ENCODE measurements at regions of chr2 and their contacts with region 1.

Region 1: DNA sequence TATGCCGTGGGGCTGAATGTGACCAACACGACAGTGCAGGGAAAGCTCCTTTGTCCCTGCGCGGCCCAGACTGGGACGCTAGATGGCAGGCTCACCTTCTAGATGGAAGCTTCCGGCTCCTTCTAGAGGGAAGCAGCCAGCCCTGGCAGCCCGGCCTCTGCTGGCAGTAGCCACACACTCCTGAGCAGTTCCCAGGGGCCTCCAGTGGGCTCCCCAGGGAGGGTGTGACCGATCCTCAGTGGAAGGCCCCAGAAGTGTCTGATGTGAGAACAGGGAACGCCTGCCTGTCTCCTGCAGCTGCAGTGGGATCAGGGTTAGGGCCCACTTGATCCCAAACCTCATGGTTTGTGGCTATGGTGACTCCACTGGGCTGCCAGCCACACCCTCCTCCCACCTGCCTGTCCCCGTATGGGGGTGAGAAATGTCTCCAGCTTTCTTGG is 48.5 kb upstream of the LRPPRC start:
- DNase-seq: peak; percentile 93
- H3K4me3 Mint-ChIP-seq: no peak overlapping the region
- H3K27ac Mint-ChIP-seq: no peak overlapping the region
- H3K4me1 Mint-ChIP-seq: no peaks in the 10 kb centered on the region
- H3K27me3 Mint-ChIP-seq: no peaks in the 10 kb centered on the region

Region 2: DNA sequence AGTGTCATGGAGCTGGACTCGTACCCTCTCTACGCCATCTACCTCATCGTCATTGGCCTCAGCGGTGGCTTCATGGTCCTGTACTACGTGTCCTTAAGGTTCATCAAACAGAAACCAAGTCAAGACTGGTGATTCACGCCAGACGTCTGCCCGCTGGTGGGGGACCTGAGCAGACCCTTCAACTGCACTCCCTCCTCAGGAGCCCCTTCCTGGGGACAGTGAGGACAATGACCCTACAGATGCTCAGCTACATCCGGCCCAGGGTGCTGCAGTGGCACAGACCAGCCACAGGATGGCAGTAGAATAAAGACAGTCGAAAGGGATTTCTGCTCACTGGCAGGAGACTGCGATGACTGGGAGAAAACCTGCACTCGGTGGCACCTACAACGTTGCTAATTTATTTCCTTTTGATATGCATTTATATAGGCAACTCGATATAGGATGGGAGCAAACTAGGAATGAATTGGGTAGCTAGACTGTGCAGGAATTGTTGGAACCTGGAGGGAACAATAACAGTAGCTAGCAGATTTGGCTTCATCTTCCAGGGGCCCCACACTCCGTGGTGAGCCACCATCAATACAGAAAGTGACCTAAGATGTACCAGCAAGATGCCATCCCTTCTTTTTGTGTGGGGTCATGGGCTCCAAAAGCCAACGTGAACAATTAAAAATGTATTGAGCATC is 166.4 kb before region 1 on chr2:
- CTCF ChIA-PET with region 1: no interaction called
- intact Hi-C with region 1: loop called (anchors 1 kb)
- DNase-seq: peak; percentile 86
- H3K4me3 Mint-ChIP-seq: no peak overlapping the region
- H3K27ac Mint-ChIP-seq: no peak overlapping the region
- H3K4me1 Mint-ChIP-seq: peaks cover 3% of the 10 kb centered on the region
- H3K27me3 Mint-ChIP-seq: peaks cover 16% of the 10 kb centered on the region

Region 3: GRCh38 chr2:44055229-44055628 is 10.9 kb after region 1 on chr2:
- CTCF ChIA-PET with region 1: interaction called, 17 read pairs
- intact Hi-C with region 1: no loop called
- DNase-seq: no peak
- H3K4me3 Mint-ChIP-seq: no peak overlapping the region
- H3K27ac Mint-ChIP-seq: no peak overlapping the region
- H3K4me1 Mint-ChIP-seq: no peaks in the 10 kb centered on the region
- H3K27me3 Mint-ChIP-seq: no peaks in the 10 kb centered on the region

Region 4: GRCh38 chr2:44087036-44087713 is 42.9 kb after region 1 on chr2:
- CTCF ChIA-PET with region 1: interaction called, 10 read pairs
- intact Hi-C with region 1: loop called (anchors 1 kb)
- DNase-seq: peak; percentile 91
- H3K4me3 Mint-ChIP-seq: peak overlapping the region; percentile 66
- H3K27ac Mint-ChIP-seq: peak overlapping the region; percentile 54
- H3K4me1 Mint-ChIP-seq: peaks cover 13% of the 10 kb centered on the region
- H3K27me3 Mint-ChIP-seq: no peaks in the 10 kb centered on the region

Region 5: DNA sequence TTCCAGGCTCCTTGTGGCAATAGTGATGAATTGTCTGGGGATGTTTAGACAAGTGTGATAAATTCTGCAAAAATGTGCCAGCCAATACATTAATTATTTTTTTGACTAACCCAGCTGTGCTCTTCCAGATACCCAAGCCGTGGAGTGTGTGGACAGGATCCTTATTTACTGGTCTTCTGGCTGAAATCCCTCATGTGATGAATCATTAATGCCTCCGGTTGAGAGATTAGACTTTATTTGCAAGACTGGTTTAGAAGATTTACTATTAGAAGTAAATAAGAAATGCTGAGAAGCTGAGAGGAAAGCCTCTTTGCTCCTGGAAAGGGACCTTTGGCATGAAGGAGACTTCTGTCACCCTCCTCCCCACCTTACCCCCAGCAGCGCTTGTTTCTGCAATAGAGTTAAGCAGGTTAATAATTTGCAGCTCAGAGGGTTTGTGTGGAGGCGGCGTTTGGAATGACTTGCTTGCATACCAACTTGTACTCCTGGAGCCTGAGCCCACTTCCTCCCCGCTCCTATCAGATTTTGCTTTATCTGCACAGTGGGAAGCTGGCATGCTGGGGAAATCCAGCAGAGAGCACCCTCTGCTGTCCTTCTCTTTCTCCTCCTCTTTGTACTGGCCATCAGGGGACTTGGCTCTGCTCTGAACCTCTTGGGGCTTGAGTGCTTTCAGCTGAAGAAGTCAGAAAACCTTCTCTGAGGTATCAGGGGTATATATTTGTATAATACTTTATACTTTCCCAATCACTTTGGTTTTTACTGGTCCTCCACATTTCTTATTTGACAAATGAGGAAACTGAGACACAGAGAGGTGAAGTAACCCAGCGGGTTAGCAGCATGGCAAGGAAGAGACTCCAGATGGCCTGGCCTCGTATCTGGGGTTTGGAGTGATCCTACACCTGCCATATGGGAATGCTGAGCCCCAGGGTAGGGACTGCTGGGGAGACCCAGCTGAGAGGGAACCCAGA is 247.3 kb after region 1 on chr2:
- CTCF ChIA-PET with region 1: interaction called, 3 read pairs
- intact Hi-C with region 1: loop called (anchors 2 kb)
- DNase-seq: peak; percentile 16
- H3K4me3 Mint-ChIP-seq: no peak overlapping the region
- H3K27ac Mint-ChIP-seq: no peak overlapping the region
- H3K4me1 Mint-ChIP-seq: peaks cover 9% of the 10 kb centered on the region
- H3K27me3 Mint-ChIP-seq: no peaks in the 10 kb centered on the region

Region 6: GRCh38 chr2:44392338-44392943 is 348.1 kb after region 1 on chr2:
- CTCF ChIA-PET with region 1: interaction called, 4 read pairs
- intact Hi-C with region 1: loop called (anchors 1 kb)
- DNase-seq: peak; percentile 72
- H3K4me3 Mint-ChIP-seq: no peak overlapping the region
- H3K27ac Mint-ChIP-seq: no peak overlapping the region
- H3K4me1 Mint-ChIP-seq: peaks cover 5% of the 10 kb centered on the region
- H3K27me3 Mint-ChIP-seq: no peaks in the 10 kb centered on the region

Measured in activated naive CD4-positive, alpha-beta T cell treated with anti-CD3 and anti-CD28 coated beads for 36 hours (primary cell).